Activated CD4-positive, alpha-beta T cell treated with anti-CD3 and anti-CD28 coated beads for 36 hours (primary cell): ENCODE measurements at regions of chr12 and their contacts with region 1.

Region 1: GRCh38 chr12:9049520-9050133 is 60.3 kb downstream of the KLRG1 start:
- DNase-seq: peak; percentile 37
- ATAC-seq: peak; percentile 76
- H3K4me3 Mint-ChIP-seq: no peak overlapping the region
- H3K27ac Mint-ChIP-seq: no peak overlapping the region
- H3K4me1 Mint-ChIP-seq: peaks cover 13% of the 10 kb centered on the region
- H3K27me3 Mint-ChIP-seq: no peaks in the 10 kb centered on the region

Region 2: GRCh38 chr12:8655421-8655820 is 394.2 kb before region 1 on chr12:
- CTCF ChIA-PET with region 1: interaction called, 22 read pairs
- POLR2A ChIA-PET with region 1: no interaction called
- intact Hi-C with region 1: loop called (anchors 1 kb)
- DNase-seq: no peak
- ATAC-seq: no peak
- H3K4me3 Mint-ChIP-seq: no peak overlapping the region
- H3K27ac Mint-ChIP-seq: no peak overlapping the region
- H3K4me1 Mint-ChIP-seq: no peaks in the 10 kb centered on the region
- H3K27me3 Mint-ChIP-seq: peaks cover 10% of the 10 kb centered on the region

Region 3: GRCh38 chr12:8681041-8681902 is 368.4 kb before region 1 on chr12:
- CTCF ChIA-PET with region 1: interaction called, 15 read pairs
- POLR2A ChIA-PET with region 1: no interaction called
- intact Hi-C with region 1: loop called (anchors 1 kb)
- DNase-seq: no peak
- ATAC-seq: no peak
- H3K4me3 Mint-ChIP-seq: no peak overlapping the region
- H3K27ac Mint-ChIP-seq: no peak overlapping the region
- H3K4me1 Mint-ChIP-seq: no peaks in the 10 kb centered on the region
- H3K27me3 Mint-ChIP-seq: no peaks in the 10 kb centered on the region

Region 4: GRCh38 chr12:8890313-8891085 is 159.1 kb before region 1 on chr12:
- CTCF ChIA-PET with region 1: interaction called, 44 read pairs
- POLR2A ChIA-PET with region 1: no interaction called
- intact Hi-C with region 1: loop called in 1 of 2 experiments (anchors 2 kb)
- DNase-seq: peak; percentile 75
- ATAC-seq: peak; percentile 74
- H3K4me3 Mint-ChIP-seq: peak overlapping the region; percentile 72
- H3K27ac Mint-ChIP-seq: no peak overlapping the region
- H3K4me1 Mint-ChIP-seq: peaks cover 3% of the 10 kb centered on the region
- H3K27me3 Mint-ChIP-seq: no peaks in the 10 kb centered on the region

Region 5: DNA sequence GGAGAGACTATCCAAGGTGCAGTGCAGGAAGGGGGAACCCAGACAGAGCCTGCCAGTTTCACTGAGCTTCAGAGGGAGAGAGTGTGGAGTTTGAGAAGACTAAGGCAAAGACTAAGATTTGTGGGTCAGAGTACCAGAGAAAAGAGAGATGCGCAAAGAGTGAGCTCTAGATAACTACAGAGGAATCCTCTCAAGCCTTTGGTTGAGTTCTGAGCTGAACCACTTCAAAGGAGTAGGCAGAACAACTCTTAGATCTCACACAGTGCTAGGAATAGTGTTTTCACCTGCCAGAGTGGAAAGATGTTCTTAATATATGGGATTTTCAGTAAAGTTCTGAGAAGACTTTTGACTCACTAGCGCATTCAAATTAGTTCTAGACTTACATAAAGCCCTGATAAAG is 89.5 kb before region 1 on chr12:
- CTCF ChIA-PET with region 1: interaction called, 13 read pairs
- POLR2A ChIA-PET with region 1: no interaction called
- intact Hi-C with region 1: no loop called
- DNase-seq: no peak
- ATAC-seq: peak; percentile 82
- H3K4me3 Mint-ChIP-seq: no peak overlapping the region
- H3K27ac Mint-ChIP-seq: peak overlapping the region; percentile 23
- H3K4me1 Mint-ChIP-seq: peaks cover 61% of the 10 kb centered on the region
- H3K27me3 Mint-ChIP-seq: no peaks in the 10 kb centered on the region

Region 6: DNA sequence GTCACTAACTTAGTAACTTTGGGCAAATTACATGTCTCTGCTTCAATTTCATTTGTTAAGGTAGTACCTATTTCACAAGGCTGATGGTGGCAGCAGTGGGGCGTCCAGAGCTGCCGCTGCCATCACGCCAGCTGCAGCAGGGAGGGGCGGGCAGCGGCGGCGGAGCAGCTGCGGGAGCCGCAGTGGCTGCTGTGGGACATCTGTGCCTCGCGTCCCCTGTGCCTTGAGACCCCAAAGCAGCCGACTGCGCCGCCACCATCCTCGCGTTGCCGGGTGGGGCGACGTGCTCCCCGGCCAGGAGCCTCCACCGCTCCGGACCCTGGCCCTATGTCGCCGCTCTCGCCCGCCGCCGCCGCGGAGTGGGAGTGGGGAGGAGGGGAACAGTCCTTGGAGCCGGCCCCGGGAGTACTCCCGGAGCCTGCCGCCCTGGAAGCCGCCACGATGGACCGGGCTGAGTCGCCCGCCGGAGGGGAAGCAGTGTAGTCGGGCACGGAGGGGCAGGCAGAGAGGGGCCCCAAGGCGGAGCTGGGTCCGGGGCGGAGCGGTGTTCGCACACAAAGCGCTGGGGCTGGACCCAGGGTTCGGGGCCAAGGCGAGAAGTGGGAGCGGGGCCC is 14.7 kb after region 1 on chr12:
- CTCF ChIA-PET with region 1: interaction called, 33 read pairs
- POLR2A ChIA-PET with region 1: no interaction called
- intact Hi-C with region 1: no loop called
- DNase-seq: peak; percentile 81
- ATAC-seq: peak; percentile 96
- H3K4me3 Mint-ChIP-seq: peak overlapping the region; percentile 69
- H3K27ac Mint-ChIP-seq: no peak overlapping the region
- H3K4me1 Mint-ChIP-seq: peaks cover 8% of the 10 kb centered on the region
- H3K27me3 Mint-ChIP-seq: peaks cover 2% of the 10 kb centered on the region

Region 7: GRCh38 chr12:9647825-9648700 is 598.4 kb after region 1 on chr12:
- CTCF ChIA-PET with region 1: no interaction called
- POLR2A ChIA-PET with region 1: no interaction called
- intact Hi-C with region 1: no loop called
- DNase-seq: peak; percentile 96
- ATAC-seq: peak; percentile 72
- H3K4me3 Mint-ChIP-seq: peak overlapping the region; percentile 100
- H3K27ac Mint-ChIP-seq: peak overlapping the region; percentile 100
- H3K4me1 Mint-ChIP-seq: peaks cover 58% of the 10 kb centered on the region
- H3K27me3 Mint-ChIP-seq: no peaks in the 10 kb centered on the region